Activated CD4-positive, alpha-beta T cell treated with anti-CD3 and anti-CD28 coated beads, Interleukin-2, amount 10 ng/mL, durations not matched to agents 7 days and 5 days (primary cell): ENCODE measurements at regions of chr12 and their contacts with region 1.

Region 1: DNA sequence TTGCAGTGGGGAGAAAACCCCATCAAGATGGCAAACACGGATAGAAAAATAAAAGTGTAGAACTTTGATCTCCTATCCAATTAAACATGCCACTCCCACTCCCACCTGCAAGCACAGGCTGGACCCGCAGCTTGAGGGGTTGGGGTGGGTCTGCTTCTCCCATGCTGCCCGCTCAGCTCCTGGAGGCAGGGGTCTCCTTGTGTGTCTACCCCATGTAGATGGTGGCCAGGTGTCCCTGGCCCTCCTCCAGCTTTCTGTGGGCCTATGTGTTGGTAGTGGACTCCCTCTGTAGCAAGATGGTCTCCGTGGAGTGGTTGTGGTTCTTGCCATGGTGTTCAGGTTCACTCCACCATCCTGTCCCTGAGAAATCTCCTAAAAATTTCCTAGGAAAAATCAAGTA is 23.5 kb upstream of the FGF23 start:
- DNase-seq: no peak
- H3K4me3 Mint-ChIP-seq: no peak overlapping the region
- H3K27ac Mint-ChIP-seq: no peak overlapping the region
- H3K4me1 Mint-ChIP-seq: no peaks in the 10 kb centered on the region
- H3K27me3 Mint-ChIP-seq: peaks cover 17% of the 10 kb centered on the region

Region 2: DNA sequence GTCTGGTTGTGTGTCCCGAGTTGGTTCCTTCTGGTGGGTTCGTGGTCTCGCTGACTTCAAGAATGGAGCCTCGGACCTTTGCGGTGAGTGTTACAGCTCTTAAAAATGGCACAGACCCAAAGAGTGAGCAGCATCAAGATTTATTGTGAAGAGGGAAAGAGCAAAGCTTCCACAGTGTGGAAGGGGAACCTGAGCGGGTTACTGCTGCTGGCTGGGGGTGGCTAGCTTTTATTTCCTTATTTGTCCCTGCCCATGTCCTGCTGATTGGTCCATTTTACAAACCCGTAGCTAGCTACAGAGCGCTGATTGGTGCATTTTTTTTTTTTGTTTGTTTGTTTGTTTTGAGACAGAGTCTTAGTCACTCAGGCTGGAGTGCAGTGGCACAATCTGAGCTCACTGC is 13.3 kb after region 1 on chr12:
- CTCF ChIA-PET with region 1: interaction called, 10 read pairs
- POLR2A ChIA-PET with region 1: no interaction called
- DNase-seq: no peak
- H3K4me3 Mint-ChIP-seq: no peak overlapping the region
- H3K27ac Mint-ChIP-seq: no peak overlapping the region
- H3K4me1 Mint-ChIP-seq: peaks cover 23% of the 10 kb centered on the region
- H3K27me3 Mint-ChIP-seq: peaks cover 25% of the 10 kb centered on the region